ENCODE measurements at regions of chr11 and their contacts with region 1.

Region 1: DNA sequence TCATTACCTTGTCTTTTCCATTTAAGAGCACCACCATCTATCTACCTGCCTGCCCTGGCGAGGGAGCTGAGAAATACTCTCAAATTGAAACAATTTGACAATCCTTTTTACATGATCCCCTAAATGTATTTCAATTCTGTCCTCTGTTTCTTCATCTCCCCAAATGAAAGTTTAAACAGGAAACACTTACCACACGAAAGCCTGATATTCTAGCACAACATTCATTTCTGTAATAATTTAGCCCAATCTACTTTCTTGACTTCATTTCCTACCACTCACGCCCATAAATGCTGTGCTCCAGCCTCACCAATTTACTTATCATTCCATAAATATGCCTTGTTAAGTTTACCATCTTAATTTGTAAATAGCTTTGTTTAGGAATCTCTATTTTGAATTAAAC is 89.8 kb upstream of the MS4A8 start:
- DNase-seq: no peak
- ATAC-seq: no peak
- H3K4me3 ChIP-seq: no peak overlapping the region
- H3K4me3 Mint-ChIP-seq: no peak overlapping the region
- H3K27ac ChIP-seq: no peak overlapping the region
- H3K27ac Mint-ChIP-seq: no peak overlapping the region
- H3K4me1 ChIP-seq: no peaks in the 10 kb centered on the region
- H3K4me1 Mint-ChIP-seq: no peaks in the 10 kb centered on the region
- H3K27me3 ChIP-seq: no peaks in the 10 kb centered on the region
- H3K27me3 Mint-ChIP-seq: peaks cover 8% of the 10 kb centered on the region
- CTCF ChIP-seq: no peak

Region 2: DNA sequence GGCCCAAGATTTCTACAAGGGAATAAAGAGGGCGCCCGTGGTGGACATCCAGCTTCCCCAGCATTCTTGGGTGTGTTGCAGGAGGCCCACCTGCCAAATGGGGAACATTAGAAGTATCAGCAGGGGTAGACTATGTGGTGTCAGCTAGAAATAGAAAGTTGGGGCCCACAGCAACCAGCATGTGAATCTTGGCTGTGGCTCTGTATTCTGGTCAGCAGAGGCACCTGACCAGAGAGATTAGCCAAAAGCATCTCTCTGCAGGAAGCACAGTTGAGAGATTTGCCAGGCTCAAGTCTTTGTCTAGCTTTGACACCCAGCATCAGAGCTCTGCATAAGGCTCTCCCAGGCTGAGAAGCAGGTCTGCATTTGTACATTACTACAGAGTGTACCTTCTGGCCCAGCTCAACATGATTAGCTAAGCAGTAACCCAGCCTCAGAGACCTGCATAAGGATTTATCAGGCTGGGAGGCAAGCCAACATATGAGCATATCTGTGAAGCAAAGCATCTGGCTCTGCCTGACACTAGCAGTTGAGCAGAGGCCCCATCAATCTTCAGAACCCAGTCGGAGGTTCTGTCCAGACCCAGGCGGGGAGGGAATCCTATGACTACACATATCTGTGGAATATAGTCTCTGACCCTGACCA is 14.5 kb before region 1 on chr11:
- CTCF ChIA-PET with region 1: no interaction called
- POLR2A ChIA-PET with region 1: no interaction called
- intact Hi-C with region 1: no loop called
- DNase-seq: no peak
- ATAC-seq: no peak
- H3K4me3 ChIP-seq: no peak overlapping the region
- H3K4me3 Mint-ChIP-seq: no peak overlapping the region
- H3K27ac ChIP-seq: no peak overlapping the region
- H3K27ac Mint-ChIP-seq: no peak overlapping the region
- H3K4me1 ChIP-seq: peaks cover 0 to 3% of the 10 kb centered on the region in 2 donors
- H3K4me1 Mint-ChIP-seq: no peaks in the 10 kb centered on the region
- H3K27me3 ChIP-seq: no peaks in the 10 kb centered on the region
- H3K27me3 Mint-ChIP-seq: no peaks in the 10 kb centered on the region
- CTCF ChIP-seq: no peak

Region 3: GRCh38 chr11:60625262-60625661 is 15.6 kb after region 1 on chr11:
- CTCF ChIA-PET with region 1: interaction called, 19 read pairs
- POLR2A ChIA-PET with region 1: no interaction called
- intact Hi-C with region 1: no loop called
- DNase-seq: no peak
- ATAC-seq: no peak
- H3K4me3 ChIP-seq: no peak overlapping the region
- H3K4me3 Mint-ChIP-seq: no peak overlapping the region
- H3K27ac ChIP-seq: no peak overlapping the region
- H3K27ac Mint-ChIP-seq: no peak overlapping the region
- H3K4me1 ChIP-seq: no peaks in the 10 kb centered on the region
- H3K4me1 Mint-ChIP-seq: peaks cover 7% of the 10 kb centered on the region
- H3K27me3 ChIP-seq: no peaks in the 10 kb centered on the region
- H3K27me3 Mint-ChIP-seq: no peaks in the 10 kb centered on the region
- CTCF ChIP-seq: no peak

Region 4: GRCh38 chr11:60717956-60718355 is 108.3 kb after region 1 on chr11:
- CTCF ChIA-PET with region 1: no interaction called
- POLR2A ChIA-PET with region 1: no interaction called
- intact Hi-C with region 1: no loop called
- DNase-seq: no peak
- ATAC-seq: no peak
- H3K4me3 ChIP-seq: no peak overlapping the region
- H3K4me3 Mint-ChIP-seq: no peak overlapping the region
- H3K27ac ChIP-seq: no peak overlapping the region
- H3K27ac Mint-ChIP-seq: no peak overlapping the region
- H3K4me1 ChIP-seq: no peaks in the 10 kb centered on the region
- H3K4me1 Mint-ChIP-seq: no peaks in the 10 kb centered on the region
- H3K27me3 ChIP-seq: peaks cover 0 to 8% (median 2%) of the 10 kb centered on the region in 4 experiments
- H3K27me3 Mint-ChIP-seq: peaks cover 43% of the 10 kb centered on the region
- CTCF ChIP-seq: no peak

Measured in B cell (primary cell).